Activated B cell treated with CpG ODN at 0.5 μM for 24 hours (primary cell): ENCODE measurements at regions of chr2 and their contacts with region 1.

Region 1: GRCh38 chr2:120312861-120313694 is 32.9 kb upstream of the INHBB start:
- DNase-seq: peak; percentile 51
- ATAC-seq: peak; percentile 70
- H3K4me3 Mint-ChIP-seq: peak overlapping the region; percentile 84
- H3K27ac Mint-ChIP-seq: no peak overlapping the region
- H3K4me1 Mint-ChIP-seq: peaks cover 13% of the 10 kb centered on the region
- H3K27me3 Mint-ChIP-seq: peaks cover 6% of the 10 kb centered on the region
- CTCF ChIP-seq: no peak

Region 2: GRCh38 chr2:119641562-119642258 is 671.4 kb before region 1 on chr2:
- CTCF ChIA-PET with region 1: interaction called, 6 read pairs
- POLR2A ChIA-PET with region 1: no interaction called
- intact Hi-C with region 1: loop called (anchors 2 kb)
- DNase-seq: peak; percentile 55
- ATAC-seq: peak; percentile 100
- H3K4me3 Mint-ChIP-seq: no peak overlapping the region
- H3K27ac Mint-ChIP-seq: no peak overlapping the region
- H3K4me1 Mint-ChIP-seq: peaks cover 4% of the 10 kb centered on the region
- H3K27me3 Mint-ChIP-seq: peaks cover 10% of the 10 kb centered on the region
- CTCF ChIP-seq: peak; percentile 90

Region 3: DNA sequence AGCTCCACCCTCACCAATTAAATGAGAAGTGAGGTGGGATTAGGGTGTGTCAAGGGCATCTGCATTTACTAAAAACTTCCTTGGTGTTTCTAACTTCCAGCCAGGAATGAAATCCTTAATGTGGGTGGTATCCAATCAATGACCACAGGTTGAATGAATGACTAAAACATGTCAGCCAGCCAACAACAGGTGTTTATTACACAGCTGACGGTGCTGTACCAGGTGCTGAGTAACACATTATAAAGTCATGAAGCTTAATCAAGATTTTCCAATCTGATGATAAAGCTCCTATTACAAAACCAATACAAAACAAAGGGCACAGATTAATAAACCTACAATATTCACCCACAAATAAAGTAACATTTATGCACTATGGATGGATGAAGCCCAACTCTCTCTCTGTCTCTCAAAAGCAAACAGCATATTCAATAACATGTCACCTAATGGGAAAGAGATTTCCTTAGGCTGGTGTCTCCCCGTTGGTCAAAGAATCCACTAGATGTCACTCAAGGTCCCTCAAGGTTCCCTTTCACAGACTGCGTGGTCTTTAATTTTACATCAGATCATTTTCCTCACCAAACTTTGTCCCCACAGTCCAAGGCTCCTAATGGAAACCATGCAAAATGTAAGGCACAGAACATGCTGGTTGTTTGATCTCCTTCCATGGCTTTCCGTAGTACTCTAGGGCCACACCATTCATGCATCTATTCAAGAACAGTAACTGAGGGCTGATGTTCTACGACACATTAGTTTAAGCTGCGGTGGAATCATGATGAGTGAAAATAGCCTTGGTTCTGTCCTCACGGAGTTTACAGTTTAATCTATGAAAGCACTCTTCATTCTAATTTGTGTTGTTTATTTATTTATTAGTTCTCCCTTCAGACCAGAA is 559.8 kb before region 1 on chr2:
- CTCF ChIA-PET with region 1: interaction called, 12 read pairs
- POLR2A ChIA-PET with region 1: no interaction called
- intact Hi-C with region 1: loop called (anchors 1 kb)
- DNase-seq: no peak
- ATAC-seq: peak; percentile 47
- H3K4me3 Mint-ChIP-seq: no peak overlapping the region
- H3K27ac Mint-ChIP-seq: no peak overlapping the region
- H3K4me1 Mint-ChIP-seq: no peaks in the 10 kb centered on the region
- H3K27me3 Mint-ChIP-seq: no peaks in the 10 kb centered on the region
- CTCF ChIP-seq: peak; percentile 42

Region 4: GRCh38 chr2:120206022-120206581 is 107.0 kb before region 1 on chr2:
- CTCF ChIA-PET with region 1: interaction called, 5 read pairs
- POLR2A ChIA-PET with region 1: no interaction called
- intact Hi-C with region 1: loop called (anchors 1 kb)
- DNase-seq: no peak
- ATAC-seq: peak; percentile 52
- H3K4me3 Mint-ChIP-seq: no peak overlapping the region
- H3K27ac Mint-ChIP-seq: no peak overlapping the region
- H3K4me1 Mint-ChIP-seq: peaks cover 10% of the 10 kb centered on the region
- H3K27me3 Mint-ChIP-seq: no peaks in the 10 kb centered on the region
- CTCF ChIP-seq: no peak

Region 5: GRCh38 chr2:120231974-120232635 is 81.0 kb before region 1 on chr2:
- CTCF ChIA-PET with region 1: interaction called, 16 read pairs
- POLR2A ChIA-PET with region 1: interaction called, 11 read pairs
- intact Hi-C with region 1: loop called (anchors 1 kb)
- DNase-seq: peak; percentile 31
- ATAC-seq: peak; percentile 90
- H3K4me3 Mint-ChIP-seq: peak overlapping the region; percentile 89
- H3K27ac Mint-ChIP-seq: peak overlapping the region; percentile 90
- H3K4me1 Mint-ChIP-seq: peaks cover 43% of the 10 kb centered on the region
- H3K27me3 Mint-ChIP-seq: no peaks in the 10 kb centered on the region
- CTCF ChIP-seq: no peak

Region 6: DNA sequence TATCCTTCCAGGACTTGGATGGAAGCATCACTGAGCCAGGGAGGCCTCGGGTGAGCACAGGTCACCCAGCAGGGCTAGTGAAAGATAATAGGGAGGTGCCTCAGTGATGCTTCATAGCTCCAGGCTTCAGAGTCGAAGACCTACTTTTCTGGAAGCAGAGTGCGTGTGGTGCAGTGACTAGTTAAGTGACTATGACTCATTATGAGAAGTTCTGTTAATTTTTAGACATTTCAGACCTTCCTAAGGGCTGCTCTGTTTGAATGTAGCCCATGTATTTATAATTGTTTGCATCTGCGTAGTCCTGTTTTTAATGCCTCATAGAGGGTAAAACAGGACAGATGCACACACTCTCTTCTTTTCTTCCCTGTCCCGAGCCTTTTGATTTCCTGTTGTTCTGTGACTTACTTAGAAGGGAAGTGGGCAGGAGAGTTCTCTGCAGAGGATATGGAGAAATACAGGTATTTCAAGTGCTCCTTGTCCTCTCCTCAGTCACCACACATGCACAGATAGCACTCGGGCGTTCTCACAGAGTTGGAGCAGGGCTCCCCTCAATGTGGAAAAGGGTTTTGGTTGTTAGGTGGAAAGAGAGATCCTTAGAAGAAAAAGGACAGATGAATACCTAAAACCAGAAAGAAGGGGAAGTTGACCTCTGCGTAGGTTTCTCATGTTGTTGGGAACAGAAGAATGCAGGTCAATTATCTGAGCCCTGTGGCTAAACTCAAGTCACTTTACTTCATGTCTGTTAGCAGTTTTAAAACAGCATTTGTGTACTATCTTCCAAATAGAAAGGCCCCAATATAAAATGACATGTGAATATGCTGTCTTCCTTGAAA is 25.7 kb before region 1 on chr2:
- CTCF ChIA-PET with region 1: interaction called, 3 read pairs
- POLR2A ChIA-PET with region 1: interaction called, 3 read pairs
- intact Hi-C with region 1: loop called (anchors 2 kb)
- DNase-seq: no peak
- ATAC-seq: peak; percentile 95
- H3K4me3 Mint-ChIP-seq: peak overlapping the region; percentile 53
- H3K27ac Mint-ChIP-seq: peak overlapping the region; percentile 89
- H3K4me1 Mint-ChIP-seq: peaks cover 19% of the 10 kb centered on the region
- H3K27me3 Mint-ChIP-seq: no peaks in the 10 kb centered on the region
- CTCF ChIP-seq: no peak